Pancreas (tissue), 10 donors: ENCODE measurements at regions of chr3 and their contacts with region 1.

Region 1: GRCh38 chr3:102224128-102224527 is 210.7 kb upstream of the ZPLD1 start:
- DNase-seq: no peak
- ATAC-seq: peak in 2 of 4 donors; percentile 57 to 66
- H3K4me3 ChIP-seq: no peak overlapping the region
- H3K27ac ChIP-seq: no peak overlapping the region
- H3K4me1 ChIP-seq: peaks cover 0 to 9% (median 4%) of the 10 kb centered on the region in 3 donors
- H3K27me3 ChIP-seq: no peaks in the 10 kb centered on the region
- CTCF ChIP-seq: no peak

Region 2: GRCh38 chr3:101809178-101810021 is 414.7 kb before region 1 on chr3:
- intact Hi-C with region 1: loop called in 2 of 3 experiments (anchors 5 kb)
- DNase-seq: peak in 2 of 6 donors; percentile 27 to 32
- ATAC-seq: peak in 3 of 4 donors; percentile 75 to 86 (median 79)
- H3K4me3 ChIP-seq: no peak overlapping the region
- H3K27ac ChIP-seq: no peak overlapping the region
- H3K4me1 ChIP-seq: peaks cover 4 to 16% (median 14%) of the 10 kb centered on the region in 3 donors
- H3K27me3 ChIP-seq: no peaks in the 10 kb centered on the region
- CTCF ChIP-seq: peak; percentile 39 to 64 (median 50)